Caco-2 (cell line): ENCODE measurements at regions of chr17 and their contacts with region 1.

Region 1: GRCh38 chr17:64281962-64282727 is 19.1 kb upstream of the TEX2 start:
- DNase-seq: peak; percentile 53 to 67
- H3K4me3 ChIP-seq: no peak overlapping the region
- H3K4me3 Mint-ChIP-seq: no peak overlapping the region
- H3K27ac Mint-ChIP-seq: no peak overlapping the region
- H3K4me1 ChIP-seq: peaks cover 10% of the 10 kb centered on the region; the same call in 1 of the 2 replicates
- H3K4me1 Mint-ChIP-seq: peaks cover 6% of the 10 kb centered on the region
- H3K27me3 ChIP-seq: no peaks in the 10 kb centered on the region
- H3K27me3 Mint-ChIP-seq: no peaks in the 10 kb centered on the region
- CTCF ChIP-seq: peak; percentile 80 to 85

Region 2: GRCh38 chr17:64025732-64026294 is 256.3 kb before region 1 on chr17:
- CTCF ChIA-PET with region 1: interaction called, 6 read pairs
- POLR2A ChIA-PET with region 1: no interaction called
- intact Hi-C with region 1: loop called (anchors 1 kb)
- DNase-seq: peak; percentile 86 to 87
- H3K4me3 ChIP-seq: peak overlapping the region; percentile 13; the same call in 1 of the 2 replicates
- H3K4me3 Mint-ChIP-seq: peak overlapping the region; percentile 71
- H3K27ac Mint-ChIP-seq: no peak overlapping the region
- H3K4me1 ChIP-seq: no peaks in the 10 kb centered on the region
- H3K4me1 Mint-ChIP-seq: peaks cover 16% of the 10 kb centered on the region
- H3K27me3 ChIP-seq: no peaks in the 10 kb centered on the region
- H3K27me3 Mint-ChIP-seq: no peaks in the 10 kb centered on the region
- CTCF ChIP-seq: peak; percentile 96 to 97

Region 3: GRCh38 chr17:64063766-64064224 is 218.3 kb before region 1 on chr17:
- CTCF ChIA-PET with region 1: no interaction called
- POLR2A ChIA-PET with region 1: no interaction called
- intact Hi-C with region 1: loop called (anchors 10 kb)
- DNase-seq: peak; percentile 73 to 81
- H3K4me3 ChIP-seq: no peak overlapping the region
- H3K4me3 Mint-ChIP-seq: no peak overlapping the region
- H3K27ac Mint-ChIP-seq: no peak overlapping the region
- H3K4me1 ChIP-seq: no peaks in the 10 kb centered on the region
- H3K4me1 Mint-ChIP-seq: peaks cover 11% of the 10 kb centered on the region
- H3K27me3 ChIP-seq: no peaks in the 10 kb centered on the region
- H3K27me3 Mint-ChIP-seq: no peaks in the 10 kb centered on the region
- CTCF ChIP-seq: peak; percentile 65 to 80

Region 4: GRCh38 chr17:64174686-64175456 is 107.3 kb before region 1 on chr17:
- CTCF ChIA-PET with region 1: no interaction called
- POLR2A ChIA-PET with region 1: no interaction called
- intact Hi-C with region 1: no loop called
- DNase-seq: no peak
- H3K4me3 ChIP-seq: no peak overlapping the region
- H3K4me3 Mint-ChIP-seq: no peak overlapping the region
- H3K27ac Mint-ChIP-seq: no peak overlapping the region
- H3K4me1 ChIP-seq: peaks cover 13% of the 10 kb centered on the region
- H3K4me1 Mint-ChIP-seq: peaks cover 15% of the 10 kb centered on the region
- H3K27me3 ChIP-seq: no peaks in the 10 kb centered on the region
- H3K27me3 Mint-ChIP-seq: no peaks in the 10 kb centered on the region
- CTCF ChIP-seq: no peak

Region 5: GRCh38 chr17:64216338-64217248 is 65.6 kb before region 1 on chr17:
- CTCF ChIA-PET with region 1: interaction called, 4 read pairs
- POLR2A ChIA-PET with region 1: no interaction called
- intact Hi-C with region 1: loop called (anchors 5 kb)
- DNase-seq: peak; percentile 75 to 82
- H3K4me3 ChIP-seq: no peak overlapping the region
- H3K4me3 Mint-ChIP-seq: no peak overlapping the region
- H3K27ac Mint-ChIP-seq: peak overlapping the region; percentile 42
- H3K4me1 ChIP-seq: peaks cover 45% of the 10 kb centered on the region
- H3K4me1 Mint-ChIP-seq: peaks cover 37% of the 10 kb centered on the region
- H3K27me3 ChIP-seq: no peaks in the 10 kb centered on the region
- H3K27me3 Mint-ChIP-seq: no peaks in the 10 kb centered on the region
- CTCF ChIP-seq: peak; percentile 30 to 55

Region 6: DNA sequence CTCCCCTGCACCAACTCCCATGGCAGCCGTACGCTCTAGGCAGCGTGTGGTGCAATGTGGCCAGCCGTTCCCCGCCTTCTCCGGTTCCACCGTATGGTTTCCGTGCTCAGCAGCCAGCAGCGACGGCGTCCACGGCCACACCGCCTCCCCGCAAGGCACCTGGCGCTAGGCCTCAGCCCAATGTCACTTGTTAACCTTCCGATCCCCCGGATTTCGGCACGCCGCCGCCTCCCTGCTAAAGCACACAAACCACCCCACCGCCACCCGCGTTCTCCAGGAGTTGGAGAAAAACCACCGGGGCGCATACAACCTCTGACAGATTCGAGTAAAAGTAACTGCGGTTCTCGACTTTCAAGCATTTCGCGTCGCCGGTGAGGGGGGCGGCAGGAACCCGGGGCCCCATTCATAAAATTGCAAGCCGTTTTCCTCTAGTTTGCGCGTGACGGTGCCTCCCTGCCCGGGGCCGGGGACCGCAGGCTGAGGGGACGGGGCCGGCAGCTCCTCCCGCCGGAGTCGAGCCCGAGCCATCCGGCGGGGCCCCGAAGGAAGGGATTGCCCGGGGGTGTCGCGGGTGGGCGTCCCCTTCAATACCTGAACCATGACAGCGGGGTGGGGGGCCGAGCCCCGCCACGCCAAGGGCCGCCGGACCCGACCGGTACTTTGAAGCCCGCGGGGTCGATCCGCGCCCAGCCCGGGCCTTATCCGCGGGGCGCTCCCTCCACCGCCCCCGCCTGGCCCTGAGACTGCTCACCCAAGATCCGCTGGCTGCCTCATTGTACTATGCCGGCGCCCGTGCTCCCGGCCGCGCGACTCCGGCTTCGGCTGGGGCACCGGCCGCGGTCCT is 19.5 kb before region 1 on chr17 and contains the start of gene TEX2:
- CTCF ChIA-PET with region 1: interaction called, 4 read pairs
- POLR2A ChIA-PET with region 1: no interaction called
- intact Hi-C with region 1: loop called (anchors 2 kb)
- DNase-seq: peak; percentile 54 to 66
- H3K4me3 ChIP-seq: peak within 1 kb of the TSS; percentile 83
- H3K4me3 Mint-ChIP-seq: peak within 1 kb of the TSS; percentile 98
- H3K27ac Mint-ChIP-seq: peak within 1 kb of the TSS; percentile 53
- H3K4me1 ChIP-seq: peaks cover 15% of the 10 kb centered on the region
- H3K4me1 Mint-ChIP-seq: peaks cover 12% of the 10 kb centered on the region
- H3K27me3 ChIP-seq: no peaks in the 10 kb centered on the region
- H3K27me3 Mint-ChIP-seq: peaks cover 4% of the 10 kb centered on the region
- CTCF ChIP-seq: no peak
- total RNA-seq, gene TEX2: 19.3 and 20.2 TPM in 2 replicates